MCF 10A (cell line): ENCODE measurements at regions of chr1 and their contacts with region 1.

Region 1: DNA sequence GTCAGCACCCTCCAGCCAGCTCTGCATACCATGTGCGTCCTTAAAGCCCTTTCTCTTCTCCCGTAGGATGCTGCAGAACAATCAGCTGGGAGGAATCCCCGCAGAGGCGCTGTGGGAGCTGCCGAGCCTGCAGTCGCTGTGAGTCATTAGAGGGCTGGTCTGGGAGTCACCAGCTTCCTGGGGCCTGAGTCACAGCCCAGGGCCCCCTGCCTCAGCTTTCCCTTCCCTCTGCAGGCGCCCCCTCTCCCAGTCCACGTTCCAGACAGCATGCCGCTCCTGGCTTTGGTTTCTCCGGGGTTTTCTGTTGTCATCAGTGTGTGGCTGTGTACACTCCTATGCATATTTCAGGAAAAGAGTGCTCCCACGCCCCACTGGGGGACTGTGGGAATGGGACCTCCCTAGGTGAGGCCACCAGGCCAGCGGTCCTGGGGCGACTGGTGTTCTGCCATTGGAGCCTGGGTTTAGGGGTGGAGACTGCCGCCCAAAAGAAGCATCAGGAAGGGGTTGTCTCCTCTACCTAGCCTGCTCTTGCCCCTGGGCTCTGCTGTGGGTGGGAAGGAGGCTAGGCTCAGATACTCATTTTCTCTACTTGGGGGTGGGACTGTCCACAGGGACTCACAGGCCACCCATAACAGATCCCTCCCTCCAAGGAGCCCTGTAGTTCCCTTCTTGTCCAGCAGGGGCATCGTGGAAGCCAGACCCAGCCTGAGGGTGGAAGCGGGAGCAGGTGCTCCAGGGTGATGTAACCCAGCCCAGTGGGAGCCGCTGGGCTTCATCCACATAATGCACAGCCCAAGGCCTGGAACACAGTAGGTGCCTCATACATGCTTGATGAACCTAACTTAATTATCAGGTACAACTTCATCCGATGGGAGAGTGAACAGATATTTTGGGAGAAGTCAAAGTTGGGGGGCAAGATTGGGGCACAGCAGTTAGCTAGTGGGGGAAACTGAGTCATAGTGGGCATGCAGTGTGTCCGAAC is 42.5 kb downstream of the LGR6 start:
- DNase-seq: peak; percentile 97
- H3K4me3 Mint-ChIP-seq: peak overlapping the region; percentile 61
- H3K27ac Mint-ChIP-seq: peak overlapping the region; percentile 49
- H3K4me1 Mint-ChIP-seq: peaks cover 35% of the 10 kb centered on the region
- H3K27me3 Mint-ChIP-seq: no peaks in the 10 kb centered on the region
- CTCF ChIP-seq: peak; percentile 100

Region 2: GRCh38 chr1:202200112-202200566 is 36.0 kb before region 1 on chr1:
- CTCF ChIA-PET with region 1: interaction called, 21 read pairs
- POLR2A ChIA-PET with region 1: interaction called, 5 read pairs
- intact Hi-C with region 1: no loop called
- DNase-seq: peak; percentile 82
- H3K4me3 Mint-ChIP-seq: no peak overlapping the region
- H3K27ac Mint-ChIP-seq: no peak overlapping the region
- H3K4me1 Mint-ChIP-seq: peaks cover 26% of the 10 kb centered on the region
- H3K27me3 Mint-ChIP-seq: peaks cover 15% of the 10 kb centered on the region
- CTCF ChIP-seq: no peak

Region 3: GRCh38 chr1:202221911-202222909 is 13.9 kb before region 1 on chr1:
- CTCF ChIA-PET with region 1: interaction called, 40 read pairs
- POLR2A ChIA-PET with region 1: interaction called, 22 read pairs
- intact Hi-C with region 1: no loop called
- DNase-seq: peak; percentile 90
- H3K4me3 Mint-ChIP-seq: no peak overlapping the region
- H3K27ac Mint-ChIP-seq: no peak overlapping the region
- H3K4me1 Mint-ChIP-seq: peaks cover 21% of the 10 kb centered on the region
- H3K27me3 Mint-ChIP-seq: peaks cover 23% of the 10 kb centered on the region
- CTCF ChIP-seq: no peak

Region 4: DNA sequence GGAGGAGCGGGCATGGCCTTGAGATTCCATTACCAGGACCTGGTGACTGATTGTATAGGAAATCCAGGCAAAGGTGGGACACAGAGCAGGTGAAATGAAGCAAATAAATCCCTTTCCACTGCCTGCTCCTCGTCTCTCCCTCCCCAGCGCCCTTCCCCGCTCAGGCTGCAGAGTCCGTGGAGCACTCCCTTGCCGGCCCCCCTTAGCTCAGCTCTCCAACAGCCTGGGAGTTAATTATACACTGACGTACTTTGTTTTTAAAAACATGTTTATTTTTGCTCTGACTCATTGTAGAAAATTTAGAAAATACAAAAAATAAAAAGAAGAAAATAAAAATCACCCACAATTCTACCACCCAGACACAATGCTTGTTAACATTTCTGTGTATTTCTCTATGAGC is 19.2 kb after region 1 on chr1:
- CTCF ChIA-PET with region 1: interaction called, 10 read pairs
- POLR2A ChIA-PET with region 1: interaction called, 5 read pairs
- intact Hi-C with region 1: no loop called
- DNase-seq: no peak
- H3K4me3 Mint-ChIP-seq: no peak overlapping the region
- H3K27ac Mint-ChIP-seq: no peak overlapping the region
- H3K4me1 Mint-ChIP-seq: peaks cover 9% of the 10 kb centered on the region
- H3K27me3 Mint-ChIP-seq: peaks cover 47% of the 10 kb centered on the region
- CTCF ChIP-seq: no peak

Region 5: GRCh38 chr1:202283379-202283844 is 47.3 kb after region 1 on chr1:
- CTCF ChIA-PET with region 1: interaction called, 12 read pairs
- POLR2A ChIA-PET with region 1: interaction called, 14 read pairs
- intact Hi-C with region 1: no loop called
- DNase-seq: peak; percentile 100
- H3K4me3 Mint-ChIP-seq: peak overlapping the region; percentile 5
- H3K27ac Mint-ChIP-seq: peak overlapping the region; percentile 82
- H3K4me1 Mint-ChIP-seq: peaks cover 56% of the 10 kb centered on the region
- H3K27me3 Mint-ChIP-seq: peaks cover 14% of the 10 kb centered on the region
- CTCF ChIP-seq: no peak